ENCODE measurements at regions of chr19 and their contacts with region 1.

Region 1: DNA sequence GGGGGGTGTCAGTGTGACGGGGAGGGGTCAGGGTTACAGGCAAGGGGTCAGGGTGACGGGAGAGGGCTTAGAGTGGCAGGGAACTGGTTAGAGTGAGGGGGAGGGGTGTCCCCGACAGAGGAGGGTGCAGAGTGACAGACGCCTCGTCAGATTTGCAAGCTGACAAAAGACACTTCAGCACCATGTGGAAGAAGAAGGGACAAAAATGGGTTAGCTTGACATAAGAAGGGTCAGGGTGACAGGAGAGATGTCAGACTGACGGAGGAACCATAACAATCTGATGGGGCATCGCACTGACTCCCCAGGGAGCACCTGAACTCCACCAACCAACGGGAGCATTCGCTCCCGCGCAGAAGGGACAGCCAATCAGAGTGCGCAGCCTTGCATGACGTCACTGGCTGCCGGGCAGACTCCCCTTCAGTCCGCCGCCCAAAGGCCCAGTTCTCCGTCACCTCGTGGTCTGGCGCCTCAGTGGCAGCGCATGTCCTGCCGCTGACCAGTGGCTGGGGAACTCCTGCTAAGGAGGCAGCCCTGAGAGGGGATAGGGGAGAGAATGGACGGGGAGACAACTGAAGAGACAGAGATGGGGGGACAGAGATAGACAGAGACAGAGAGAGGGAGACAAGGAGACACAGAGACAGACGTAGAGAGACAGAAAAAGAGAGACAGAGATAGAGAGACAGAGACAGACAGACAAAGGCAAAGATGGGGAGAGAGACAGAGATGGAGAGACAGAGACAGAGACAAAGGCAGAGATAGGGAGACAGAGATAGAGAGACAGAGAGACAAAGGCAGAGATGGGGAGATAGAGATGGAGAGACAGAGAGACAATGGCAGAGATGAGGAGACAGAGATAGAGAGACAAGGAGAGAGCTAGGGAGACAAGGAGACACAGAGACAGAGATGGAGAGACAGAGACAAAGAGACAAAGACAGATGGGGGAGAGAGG is 30.2 kb downstream of the C19orf81 start:
- DNase-seq: peak; percentile 21 to 84 (median 65)
- ATAC-seq: peak; percentile 82 to 98 (median 90)
- H3K4me3 ChIP-seq: no peak overlapping the region
- H3K4me3 Mint-ChIP-seq: no peak overlapping the region
- H3K27ac ChIP-seq: no peak overlapping the region
- H3K27ac Mint-ChIP-seq: peak overlapping the region in 1 of 2 donors; percentile 6
- H3K4me1 ChIP-seq: peaks cover 0 to 7% of the 10 kb centered on the region in 2 experiments
- H3K4me1 Mint-ChIP-seq: peaks cover 7 to 12% (median 10%) of the 10 kb centered on the region in 3 donors
- H3K27me3 ChIP-seq: peaks cover 0 to 53% of the 10 kb centered on the region in 2 experiments
- H3K27me3 Mint-ChIP-seq: peaks cover 50 to 64% of the 10 kb centered on the region in 2 donors

Region 2: DNA sequence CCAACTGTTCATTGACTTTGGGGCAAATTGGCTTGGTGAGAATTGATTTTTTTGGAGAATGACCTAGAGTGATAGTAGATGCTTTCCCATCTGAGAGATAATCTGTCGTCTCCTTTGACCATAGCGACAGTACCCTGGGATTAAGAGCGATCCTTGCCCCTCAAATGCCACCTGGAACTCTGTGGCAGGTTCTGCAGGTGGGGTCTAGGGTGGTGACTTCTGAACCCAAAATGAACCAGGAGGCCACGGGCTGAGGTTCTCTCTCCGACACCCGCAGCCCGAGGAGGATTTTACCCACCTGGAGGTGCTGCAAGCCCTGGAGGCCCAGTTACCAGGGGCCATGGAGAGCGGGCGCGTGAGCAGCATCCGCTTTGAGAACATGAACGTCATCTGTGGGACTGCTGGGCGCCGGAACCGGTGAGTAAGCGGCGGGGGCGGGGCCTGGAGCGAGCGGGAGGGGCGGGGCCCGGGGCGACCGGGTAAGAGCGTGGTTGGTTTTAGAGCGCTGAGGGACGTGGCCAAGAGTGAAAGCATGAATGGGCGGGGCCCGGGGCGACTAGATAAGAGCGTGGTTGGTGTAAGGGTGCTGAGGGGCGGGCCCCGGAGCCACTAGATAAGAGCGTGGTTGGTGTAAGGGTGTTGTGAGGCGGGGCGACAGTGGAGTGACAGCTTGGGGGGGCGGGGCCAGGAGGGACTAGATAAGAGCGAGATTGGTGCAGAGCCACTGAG is 21.6 kb before region 1 on chr19:
- CTCF ChIA-PET with region 1: no interaction called
- POLR2A ChIA-PET with region 1: no interaction called
- DNase-seq: peak; percentile 25 to 88 (median 75)
- ATAC-seq: peak; percentile 77 to 91 (median 80)
- H3K4me3 ChIP-seq: peak overlapping the region in 1 of 2 donors; percentile 35
- H3K4me3 Mint-ChIP-seq: peak overlapping the region; percentile 45 to 82 (median 61)
- H3K27ac ChIP-seq: no peak overlapping the region
- H3K27ac Mint-ChIP-seq: peak overlapping the region in 1 of 2 donors; percentile 74
- H3K4me1 ChIP-seq: peaks cover 0 to 18% of the 10 kb centered on the region in 2 experiments
- H3K4me1 Mint-ChIP-seq: peaks cover 14 to 19% (median 18%) of the 10 kb centered on the region in 3 donors
- H3K27me3 ChIP-seq: peaks cover 8 to 79% of the 10 kb centered on the region in 2 experiments
- H3K27me3 Mint-ChIP-seq: peaks cover 73 to 78% of the 10 kb centered on the region in 2 donors

Region 3: DNA sequence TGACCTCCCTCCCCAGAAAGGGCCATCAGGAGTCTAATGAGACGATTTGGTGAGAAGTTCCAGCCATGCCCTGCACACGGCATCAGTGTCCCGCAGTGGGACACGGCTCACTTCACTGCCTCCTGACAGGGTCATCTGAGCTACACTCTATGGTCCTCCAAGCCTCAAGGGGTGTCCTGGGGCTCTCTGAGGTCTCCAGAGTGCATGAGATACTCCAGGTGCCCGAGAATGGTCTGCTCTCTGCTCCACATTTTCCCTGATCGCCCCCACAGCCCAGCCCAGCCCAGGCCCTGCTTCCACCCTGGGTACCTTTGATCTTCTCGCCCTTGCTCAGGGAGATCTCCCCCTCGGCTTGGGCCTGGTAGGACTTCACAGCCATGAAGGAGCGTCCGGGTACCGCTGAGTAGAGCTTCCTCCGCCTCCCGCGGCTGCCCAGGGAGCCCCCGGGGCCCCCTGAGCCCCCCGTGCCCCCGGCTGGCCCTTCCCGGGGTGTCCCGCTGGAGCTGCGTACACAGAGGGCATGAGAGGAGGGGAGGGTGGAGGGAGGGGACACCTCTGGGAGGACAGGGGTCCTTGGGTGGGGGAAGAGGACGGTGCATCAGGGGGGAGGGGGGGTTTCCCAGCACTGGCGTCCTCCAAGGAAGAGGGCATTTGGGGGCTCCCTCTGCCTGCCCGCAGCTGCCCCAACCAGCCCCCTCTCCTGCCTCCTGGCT is 22.9 kb after region 1 on chr19:
- CTCF ChIA-PET with region 1: no interaction called
- POLR2A ChIA-PET with region 1: interaction called in 1 of 2 experiments, 13 read pairs
- DNase-seq: no peak
- ATAC-seq: no peak
- H3K4me3 ChIP-seq: no peak overlapping the region
- H3K4me3 Mint-ChIP-seq: no peak overlapping the region
- H3K27ac ChIP-seq: no peak overlapping the region
- H3K27ac Mint-ChIP-seq: no peak overlapping the region
- H3K4me1 ChIP-seq: no peaks in the 10 kb centered on the region
- H3K4me1 Mint-ChIP-seq: no peaks in the 10 kb centered on the region
- H3K27me3 ChIP-seq: peaks cover 0 to 72% of the 10 kb centered on the region in 2 experiments
- H3K27me3 Mint-ChIP-seq: peaks cover 41 to 61% of the 10 kb centered on the region in 2 donors

Region 4: GRCh38 chr19:50794439-50795237 is 115.2 kb after region 1 on chr19:
- CTCF ChIA-PET with region 1: no interaction called
- POLR2A ChIA-PET with region 1: no interaction called
- DNase-seq: peak in 1 of 35 experiments; percentile 35
- ATAC-seq: peak in 2 of 4 experiments; percentile 30 to 38
- H3K4me3 ChIP-seq: no peak overlapping the region
- H3K4me3 Mint-ChIP-seq: no peak overlapping the region
- H3K27ac ChIP-seq: no peak overlapping the region
- H3K27ac Mint-ChIP-seq: no peak overlapping the region
- H3K4me1 ChIP-seq: peaks cover 0 to 8% of the 10 kb centered on the region in 2 experiments
- H3K4me1 Mint-ChIP-seq: peaks cover 5 to 8% (median 6%) of the 10 kb centered on the region in 3 donors
- H3K27me3 ChIP-seq: peaks cover 0 to 5% of the 10 kb centered on the region in 2 experiments
- H3K27me3 Mint-ChIP-seq: no peaks in the 10 kb centered on the region